Caco-2 (cell line): ENCODE measurements at regions of chr17 and their contacts with region 1.

Region 1: DNA sequence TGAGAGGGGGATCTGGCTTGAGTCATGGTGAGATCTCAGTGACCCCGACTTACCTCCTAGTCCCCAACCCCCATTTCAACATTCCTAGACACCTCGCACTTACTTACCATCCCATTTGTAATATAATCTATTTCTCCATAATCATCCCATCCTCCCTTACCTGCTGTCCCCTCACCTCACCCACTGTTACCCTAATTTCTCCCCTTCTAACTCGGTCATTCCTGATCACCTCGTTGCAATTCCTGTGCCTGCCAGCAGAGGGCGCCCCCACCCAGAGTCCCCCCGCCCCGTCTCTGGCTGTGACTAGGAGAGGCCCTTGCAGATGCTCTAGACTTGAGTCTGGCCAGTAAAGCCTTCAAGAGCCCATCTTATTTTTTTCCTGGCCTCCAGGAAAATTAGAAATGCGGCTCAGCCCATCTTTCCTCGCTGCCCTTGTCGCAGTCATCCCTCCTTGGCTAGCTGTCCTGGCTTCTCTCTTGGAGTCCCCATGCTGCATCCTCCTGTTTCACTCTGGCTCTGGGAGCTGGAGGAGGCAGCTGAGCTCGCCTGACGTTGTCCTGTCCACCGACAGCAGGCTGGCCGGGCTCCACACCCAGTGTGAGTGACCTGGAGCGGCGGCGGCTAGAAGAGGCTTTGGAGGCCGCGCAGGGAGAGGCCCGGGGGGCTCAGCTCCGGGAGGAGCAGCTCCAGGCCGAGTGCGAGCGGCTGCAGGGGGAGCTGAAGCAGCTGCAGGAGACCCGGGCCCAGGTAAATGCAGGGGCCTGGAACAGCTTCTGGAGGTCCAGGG is 5.0 kb downstream of the TBKBP1 start:
- DNase-seq: peak; percentile 85 to 88
- H3K4me3 ChIP-seq: no peak overlapping the region
- H3K4me3 Mint-ChIP-seq: no peak overlapping the region
- H3K27ac Mint-ChIP-seq: no peak overlapping the region
- H3K4me1 ChIP-seq: peaks cover 6% of the 10 kb centered on the region
- H3K4me1 Mint-ChIP-seq: peaks cover 7% of the 10 kb centered on the region
- H3K27me3 ChIP-seq: no peaks in the 10 kb centered on the region
- H3K27me3 Mint-ChIP-seq: no peaks in the 10 kb centered on the region
- CTCF ChIP-seq: peak; percentile 100

Region 2: GRCh38 chr17:47687748-47688147 is 11.2 kb before region 1 on chr17:
- CTCF ChIA-PET with region 1: interaction called, 19 read pairs
- POLR2A ChIA-PET with region 1: no interaction called
- intact Hi-C with region 1: no loop called
- DNase-seq: peak in 1 of 2 experiments; percentile 59
- H3K4me3 ChIP-seq: no peak overlapping the region
- H3K4me3 Mint-ChIP-seq: no peak overlapping the region
- H3K27ac Mint-ChIP-seq: peak overlapping the region; percentile 9
- H3K4me1 ChIP-seq: peaks cover 3% of the 10 kb centered on the region
- H3K4me1 Mint-ChIP-seq: peaks cover 7% of the 10 kb centered on the region
- H3K27me3 ChIP-seq: no peaks in the 10 kb centered on the region
- H3K27me3 Mint-ChIP-seq: no peaks in the 10 kb centered on the region
- CTCF ChIP-seq: no peak

Region 3: GRCh38 chr17:47733047-47733673 is 34.2 kb after region 1 on chr17 and contains the start of gene TBX21:
- CTCF ChIA-PET with region 1: interaction called, 9 read pairs
- POLR2A ChIA-PET with region 1: interaction called, 3 read pairs
- intact Hi-C with region 1: loop called (anchors 2 kb)
- DNase-seq: peak; percentile 93 to 94
- H3K4me3 ChIP-seq: peak within 1 kb of the TSS; percentile 37
- H3K4me3 Mint-ChIP-seq: peak within 1 kb of the TSS; percentile 68
- H3K27ac Mint-ChIP-seq: no peak within 1 kb of the TSS
- H3K4me1 ChIP-seq: peaks cover 9% of the 10 kb centered on the region
- H3K4me1 Mint-ChIP-seq: peaks cover 7% of the 10 kb centered on the region
- H3K27me3 ChIP-seq: peaks cover 18% of the 10 kb centered on the region
- H3K27me3 Mint-ChIP-seq: peaks cover 45% of the 10 kb centered on the region
- CTCF ChIP-seq: peak; percentile 55 to 89
- total RNA-seq, gene TBX21: not detected in 2 replicates

Region 4: DNA sequence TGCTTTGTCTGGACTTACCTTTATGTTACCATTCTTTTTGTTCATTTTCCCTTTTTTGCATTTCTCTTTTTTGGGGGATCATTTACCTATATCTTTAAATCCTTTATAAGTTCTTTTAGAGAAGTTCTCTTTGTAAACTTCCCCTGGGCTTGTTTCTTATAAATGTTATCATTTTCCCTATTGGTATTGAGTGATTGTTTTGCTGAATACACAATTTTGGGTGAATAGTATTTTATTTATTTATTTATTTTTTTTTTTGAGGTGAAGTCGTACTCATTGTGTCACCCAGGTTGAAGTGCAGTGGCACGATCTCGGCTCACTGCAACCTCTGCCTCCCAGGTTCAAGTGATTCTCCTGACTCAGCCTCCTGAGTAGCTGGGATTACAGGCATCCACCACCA is 52.5 kb after region 1 on chr17:
- CTCF ChIA-PET with region 1: interaction called, 7 read pairs
- POLR2A ChIA-PET with region 1: interaction called, 11 read pairs
- intact Hi-C with region 1: no loop called
- DNase-seq: no peak
- H3K4me3 ChIP-seq: no peak overlapping the region
- H3K4me3 Mint-ChIP-seq: no peak overlapping the region
- H3K27ac Mint-ChIP-seq: no peak overlapping the region
- H3K4me1 ChIP-seq: no peaks in the 10 kb centered on the region
- H3K4me1 Mint-ChIP-seq: no peaks in the 10 kb centered on the region
- H3K27me3 ChIP-seq: no peaks in the 10 kb centered on the region
- H3K27me3 Mint-ChIP-seq: peaks cover 30% of the 10 kb centered on the region
- CTCF ChIP-seq: no peak

Region 5: DNA sequence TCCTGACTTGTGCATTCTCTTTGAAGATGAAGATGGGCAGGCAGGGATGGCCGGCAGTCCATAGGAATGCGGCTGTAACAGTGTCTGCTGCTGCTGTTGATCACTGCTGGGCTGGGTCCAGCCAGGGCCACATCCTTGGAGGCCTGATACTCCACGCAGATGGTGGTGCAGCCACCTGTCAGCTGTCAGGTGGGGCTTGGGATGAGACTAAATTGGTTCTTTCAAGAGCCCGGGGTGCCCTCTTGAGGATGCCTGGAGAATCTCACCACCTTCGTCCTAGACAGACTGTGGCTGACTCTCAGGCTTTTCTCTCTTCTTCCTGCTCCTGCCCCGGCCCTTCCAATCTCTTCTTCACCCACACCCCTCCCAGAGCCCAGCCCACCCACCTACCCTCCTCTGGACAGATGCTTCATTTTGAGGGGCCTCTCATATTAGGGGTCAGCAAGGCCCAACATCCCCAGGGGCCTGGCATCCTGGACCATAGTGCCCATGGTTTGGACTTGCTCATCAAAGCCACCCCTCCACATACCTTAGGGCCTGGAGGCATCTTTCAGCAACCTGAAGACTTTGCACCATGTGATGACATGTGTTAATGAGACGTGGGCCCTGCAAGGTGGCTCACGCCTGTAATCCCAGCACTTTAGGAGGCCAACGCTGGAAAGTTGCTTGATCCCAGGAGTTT is 103.5 kb after region 1 on chr17:
- CTCF ChIA-PET with region 1: interaction called, 3 read pairs
- POLR2A ChIA-PET with region 1: no interaction called
- intact Hi-C with region 1: loop called (anchors 1 kb)
- DNase-seq: peak; percentile 91
- H3K4me3 ChIP-seq: no peak overlapping the region
- H3K4me3 Mint-ChIP-seq: no peak overlapping the region
- H3K27ac Mint-ChIP-seq: no peak overlapping the region
- H3K4me1 ChIP-seq: no peaks in the 10 kb centered on the region
- H3K4me1 Mint-ChIP-seq: peaks cover under 1% of the 10 kb centered on the region
- H3K27me3 ChIP-seq: no peaks in the 10 kb centered on the region
- H3K27me3 Mint-ChIP-seq: peaks cover 3% of the 10 kb centered on the region
- CTCF ChIP-seq: peak; percentile 96 to 98